Activated CD4-positive, alpha-beta memory T cell treated with anti-CD3 and anti-CD28 coated beads for 36 hours (primary cell): ENCODE measurements at regions of chr19 and their contacts with region 1.

Region 1: GRCh38 chr19:46537136-46538097 is 41.8 kb upstream of the PNMA8B start:
- DNase-seq: peak; percentile 74
- H3K4me3 Mint-ChIP-seq: no peak overlapping the region
- H3K27ac Mint-ChIP-seq: no peak overlapping the region
- H3K4me1 Mint-ChIP-seq: peaks cover 4% of the 10 kb centered on the region
- H3K27me3 Mint-ChIP-seq: no peaks in the 10 kb centered on the region

Region 2: DNA sequence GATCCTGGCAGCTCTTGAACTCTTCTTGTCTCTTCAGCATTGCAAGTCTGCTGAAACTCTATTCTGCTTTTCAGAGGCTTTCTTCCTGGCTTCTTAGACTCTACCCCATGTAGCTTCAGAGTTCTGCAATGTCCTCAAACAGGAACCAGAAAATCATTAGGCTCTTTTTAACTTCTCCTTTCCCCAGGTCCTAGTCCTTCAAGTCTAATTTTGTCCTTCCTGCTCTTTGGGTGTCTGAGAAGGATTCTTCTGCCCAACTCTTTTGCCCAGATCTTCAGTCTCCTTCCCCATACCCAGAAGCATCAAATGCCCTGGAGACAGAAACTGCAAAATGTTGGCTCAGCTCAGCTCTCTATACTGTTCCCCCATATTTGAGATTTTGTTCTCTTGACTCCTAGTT is 13.7 kb after region 1 on chr19:
- CTCF ChIA-PET with region 1: interaction called, 15 read pairs
- POLR2A ChIA-PET with region 1: interaction called, 4 read pairs
- intact Hi-C with region 1: no loop called
- DNase-seq: no peak
- H3K4me3 Mint-ChIP-seq: no peak overlapping the region
- H3K27ac Mint-ChIP-seq: no peak overlapping the region
- H3K4me1 Mint-ChIP-seq: peaks cover 2% of the 10 kb centered on the region
- H3K27me3 Mint-ChIP-seq: peaks cover 6% of the 10 kb centered on the region